AG04449 (cell line): ENCODE measurements at regions of chr12 and their contacts with region 1.

Region 1: DNA sequence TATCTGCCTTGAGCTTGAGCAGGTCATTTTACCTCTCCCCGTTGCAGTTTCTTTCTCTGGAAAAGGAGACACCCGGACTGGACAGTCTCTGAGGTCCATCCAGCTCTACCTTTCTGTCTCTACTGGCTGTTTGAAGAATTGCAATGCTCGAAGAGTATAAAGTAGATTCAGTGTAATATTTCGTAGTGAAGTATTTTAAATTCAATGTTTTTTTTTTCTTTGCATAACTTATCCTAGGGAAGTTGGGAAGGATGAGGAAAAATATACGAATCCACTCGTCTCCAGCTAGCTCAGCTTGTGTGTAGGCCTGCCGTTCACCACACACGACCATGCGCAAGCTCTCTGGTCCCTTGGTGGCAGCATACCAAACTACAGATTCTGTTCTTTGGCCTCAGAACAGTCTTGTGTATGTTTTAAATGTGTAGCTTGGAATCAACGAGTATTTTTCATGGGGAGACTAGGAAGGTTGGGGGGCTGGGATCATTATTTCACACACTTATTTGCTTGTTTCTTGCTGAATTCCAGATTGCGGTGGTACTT is 307.9 kb downstream of the CACNA1C start:
- DNase-seq: no peak
- H3K4me3 ChIP-seq: no peak overlapping the region
- CTCF ChIP-seq: no peak

Region 2: DNA sequence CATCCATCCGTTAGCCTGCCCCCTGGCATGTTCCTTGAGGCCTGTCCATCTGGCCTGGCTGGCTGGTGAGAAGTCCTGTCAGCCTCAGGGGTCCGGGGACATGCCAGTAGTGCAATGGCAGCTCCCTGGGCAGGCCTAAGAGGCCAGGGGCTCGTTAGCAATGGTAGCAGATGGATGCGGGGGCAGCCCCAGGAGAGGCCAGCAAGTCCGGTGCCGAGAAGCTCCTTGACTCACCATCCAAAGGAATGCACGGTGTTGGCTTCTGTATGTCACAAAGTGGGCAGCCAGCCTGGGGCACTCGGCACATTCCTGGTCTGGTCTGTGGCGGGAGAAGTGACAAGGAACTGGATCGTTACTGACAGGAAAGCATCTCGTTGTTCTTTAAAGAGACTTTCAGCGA is 12.0 kb after region 1 on chr12:
- CTCF ChIA-PET with region 1: interaction called, 11 read pairs
- POLR2A ChIA-PET with region 1: interaction called, 3 read pairs
- DNase-seq: no peak
- H3K4me3 ChIP-seq: no peak overlapping the region
- CTCF ChIP-seq: no peak

Region 3: GRCh38 chr12:2467447-2468195 is 106.9 kb after region 1 on chr12:
- CTCF ChIA-PET with region 1: no interaction called
- POLR2A ChIA-PET with region 1: no interaction called
- DNase-seq: no peak
- H3K4me3 ChIP-seq: no peak overlapping the region
- CTCF ChIP-seq: no peak